Activated CD8-positive, alpha-beta T cell treated with anti-CD3 and anti-CD28 coated beads, Interleukin-2, amount 10 ng/mL, durations not matched to agents 7 days and 5 days (primary cell): ENCODE measurements at regions of chr6 and their contacts with region 1.

Region 1: DNA sequence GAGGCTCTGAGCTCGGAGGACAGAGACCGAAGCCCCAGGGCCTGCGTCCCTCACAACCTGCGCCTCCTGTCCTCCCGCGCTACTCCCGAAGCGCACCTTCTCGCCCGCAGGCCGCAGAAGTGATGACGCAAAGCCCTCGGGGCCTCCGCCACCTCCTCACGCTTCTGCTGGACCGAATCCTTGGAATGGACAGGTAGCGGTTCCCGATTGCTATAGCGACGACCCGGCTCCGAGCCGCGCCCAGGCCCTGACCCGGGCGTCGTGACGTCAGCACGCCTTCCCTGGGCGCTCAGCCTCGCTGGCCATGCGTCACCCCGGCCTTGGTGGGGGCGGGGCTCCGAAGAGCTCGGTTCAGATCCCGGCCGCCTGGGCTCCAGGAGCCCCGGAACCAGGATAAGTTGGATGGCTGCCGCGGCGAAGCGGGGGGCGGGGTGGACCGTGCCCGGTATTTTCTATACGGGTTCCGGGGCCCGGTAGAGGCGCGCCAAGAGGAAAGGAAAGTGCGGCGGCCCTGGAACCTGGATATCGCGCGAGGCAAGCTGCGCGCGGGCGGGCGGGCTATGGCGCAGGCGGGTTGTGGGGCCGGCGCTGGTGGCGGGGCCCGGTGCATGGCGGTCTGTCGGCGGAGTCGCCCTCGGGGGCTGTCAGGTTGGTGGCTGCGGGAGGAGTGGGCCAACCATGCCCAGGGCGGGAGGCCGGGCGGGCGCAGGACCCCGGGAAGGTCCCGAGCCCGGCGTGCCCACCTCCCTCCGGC is at the start of gene ZNF76:
- DNase-seq: peak; percentile 92
- ATAC-seq: peak; percentile 89
- H3K4me3 Mint-ChIP-seq: peak within 1 kb of the TSS; percentile 97
- H3K27ac Mint-ChIP-seq: peak within 1 kb of the TSS; percentile 92
- H3K4me1 Mint-ChIP-seq: peaks cover 38% of the 10 kb centered on the region
- H3K27me3 Mint-ChIP-seq: no peaks in the 10 kb centered on the region
- total RNA-seq, gene ZNF76: 39.4 to 41.6 TPM

Region 2: DNA sequence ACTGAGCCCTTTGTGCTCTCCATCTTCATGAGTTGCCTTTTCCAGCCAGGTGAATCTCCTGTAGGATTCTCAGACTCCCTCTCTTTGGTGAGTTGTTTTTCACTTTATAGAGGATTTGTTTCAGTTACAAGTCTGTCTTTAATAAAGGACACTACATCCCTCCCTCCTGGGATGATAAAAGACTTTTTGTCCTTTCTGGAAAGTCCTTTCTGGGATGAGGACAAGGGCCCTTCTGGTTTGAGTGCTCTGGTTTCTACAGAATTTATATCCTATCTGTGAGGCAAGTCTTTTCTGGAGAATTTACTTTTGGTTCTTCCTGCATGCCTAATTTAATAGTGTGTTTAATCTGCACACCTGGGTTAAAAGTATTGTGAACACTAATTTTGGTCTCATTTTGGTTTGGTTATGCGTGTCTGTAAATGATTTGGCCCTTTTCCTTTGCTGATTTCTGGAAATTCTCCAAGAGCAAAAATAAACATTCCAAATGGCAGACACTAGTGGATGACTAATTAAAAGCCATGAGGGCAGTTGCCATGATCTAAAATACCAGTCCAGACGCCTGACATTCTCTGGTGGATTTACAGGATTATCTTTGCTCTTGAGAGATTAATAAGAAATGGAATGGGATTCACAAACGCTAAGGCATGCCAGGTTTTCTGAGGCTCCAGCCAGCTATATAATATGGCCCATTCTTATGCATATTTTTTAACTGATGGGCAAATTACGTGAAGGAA is 163.1 kb before region 1 on chr6:
- CTCF ChIA-PET with region 1: no interaction called
- POLR2A ChIA-PET with region 1: no interaction called
- DNase-seq: no peak
- ATAC-seq: no peak
- H3K4me3 Mint-ChIP-seq: no peak overlapping the region
- H3K27ac Mint-ChIP-seq: no peak overlapping the region
- H3K4me1 Mint-ChIP-seq: no peaks in the 10 kb centered on the region
- H3K27me3 Mint-ChIP-seq: peaks cover 11% of the 10 kb centered on the region

Region 3: DNA sequence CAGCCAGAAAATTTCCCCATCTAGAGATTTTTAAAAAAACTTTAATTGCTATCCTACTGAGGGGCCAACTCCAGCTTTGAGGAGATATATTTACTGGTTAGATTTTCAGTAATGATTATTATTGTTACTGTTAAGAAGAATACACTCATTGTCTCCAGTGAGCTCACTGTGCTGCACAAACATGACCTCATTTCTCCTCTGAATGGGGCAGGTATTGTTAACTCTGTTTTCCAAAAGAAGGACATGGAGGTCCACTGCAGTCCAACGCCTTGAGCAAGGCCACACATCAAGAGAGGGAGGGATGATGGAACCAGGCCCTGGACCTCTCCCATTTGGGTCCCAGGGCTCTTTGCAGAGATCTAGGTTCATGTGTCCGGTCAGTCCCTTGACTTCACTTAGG is 59.5 kb before region 1 on chr6:
- CTCF ChIA-PET with region 1: no interaction called
- POLR2A ChIA-PET with region 1: no interaction called
- DNase-seq: no peak
- ATAC-seq: no peak
- H3K4me3 Mint-ChIP-seq: no peak overlapping the region
- H3K27ac Mint-ChIP-seq: no peak overlapping the region
- H3K4me1 Mint-ChIP-seq: no peaks in the 10 kb centered on the region
- H3K27me3 Mint-ChIP-seq: peaks cover 39% of the 10 kb centered on the region

Region 4: DNA sequence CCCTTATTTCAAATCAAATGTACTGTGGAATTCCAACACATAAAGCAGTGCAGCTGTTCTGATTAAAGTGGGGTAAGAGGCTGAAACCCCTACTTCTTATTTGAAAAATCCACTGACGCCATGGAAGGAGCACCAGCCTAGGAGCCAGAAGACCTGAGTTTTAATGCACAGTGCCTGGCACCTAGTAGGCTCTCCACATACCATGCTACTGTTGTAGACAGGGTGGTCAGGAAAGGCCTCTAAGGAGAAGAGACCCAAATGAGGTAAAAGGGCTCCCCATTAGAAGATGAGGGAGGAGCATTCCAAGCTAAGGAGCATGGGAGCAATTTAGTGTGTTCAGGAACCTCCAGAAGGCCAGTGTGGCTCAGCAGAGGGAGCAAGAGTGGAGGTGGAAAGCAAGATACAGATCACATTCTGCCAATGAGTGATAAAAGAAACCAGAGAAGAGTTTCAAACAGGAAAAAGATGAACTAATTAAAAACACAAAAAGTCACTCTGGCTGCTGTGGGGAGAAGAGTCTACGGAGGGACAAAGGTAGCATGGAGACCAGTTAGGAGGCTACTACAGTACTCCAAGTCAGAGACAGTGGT is 11.6 kb before region 1 on chr6:
- CTCF ChIA-PET with region 1: interaction called, 16 read pairs
- POLR2A ChIA-PET with region 1: interaction called, 3 read pairs
- DNase-seq: no peak
- ATAC-seq: no peak
- H3K4me3 Mint-ChIP-seq: no peak overlapping the region
- H3K27ac Mint-ChIP-seq: peak overlapping the region; percentile 40
- H3K4me1 Mint-ChIP-seq: peaks cover 18% of the 10 kb centered on the region
- H3K27me3 Mint-ChIP-seq: no peaks in the 10 kb centered on the region

Region 5: GRCh38 chr6:35370124-35370741 is 110.9 kb after region 1 on chr6:
- CTCF ChIA-PET with region 1: no interaction called
- POLR2A ChIA-PET with region 1: no interaction called
- DNase-seq: peak; percentile 62
- ATAC-seq: peak; percentile 79
- H3K4me3 Mint-ChIP-seq: peak overlapping the region; percentile 51
- H3K27ac Mint-ChIP-seq: peak overlapping the region; percentile 87
- H3K4me1 Mint-ChIP-seq: peaks cover 61% of the 10 kb centered on the region
- H3K27me3 Mint-ChIP-seq: no peaks in the 10 kb centered on the region